SK-N-SH (cell line): ENCODE measurements at regions of chr1 and their contacts with region 1.

Region 1: DNA sequence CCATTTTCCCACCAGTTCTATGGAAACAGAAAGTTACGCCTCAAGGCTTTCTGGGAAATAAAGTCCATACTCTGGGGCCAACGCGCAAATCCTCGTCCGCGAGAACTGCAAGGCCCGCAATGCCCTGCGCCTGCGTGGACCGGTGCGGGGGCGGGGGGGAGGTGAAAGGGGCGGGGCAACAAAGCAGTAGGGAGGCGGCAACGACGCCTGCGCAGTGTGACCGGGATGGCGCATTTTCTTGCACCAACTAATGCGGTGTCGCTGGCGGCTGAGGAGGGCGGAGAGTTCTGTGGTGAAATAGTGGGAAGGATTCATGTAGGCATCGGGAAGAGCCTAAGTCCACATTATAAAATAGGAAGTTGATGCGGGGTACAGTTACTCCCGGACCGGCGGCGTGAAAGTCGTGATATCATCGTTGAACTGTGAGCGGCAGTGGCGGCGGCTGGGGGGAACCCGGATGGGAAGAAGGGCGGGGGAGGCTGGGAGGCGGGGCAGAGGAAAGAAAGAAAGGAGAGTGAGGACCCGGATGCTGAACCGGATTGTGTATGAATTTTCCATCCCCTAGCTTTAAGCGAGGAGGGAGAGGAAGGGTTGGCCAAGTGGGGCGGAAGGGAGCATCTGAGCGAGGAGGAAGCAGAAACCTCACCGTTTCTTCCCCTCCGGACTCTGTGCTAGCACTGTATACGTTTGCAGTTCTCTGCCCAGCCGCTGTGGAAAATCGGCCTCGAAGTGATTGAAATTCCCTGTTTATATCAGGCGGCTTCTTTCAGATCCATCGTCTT is at the start of gene GGPS1:
- DNase-seq: peak; percentile 92
- H3K4me3 ChIP-seq: peak within 1 kb of the TSS; percentile 86
- H3K27ac ChIP-seq: peak within 1 kb of the TSS; percentile 96 to 99
- H3K4me1 ChIP-seq: peaks cover 13 to 28% of the 10 kb centered on the region in 2 experiments; a peak in 3 of 4 replicates
- H3K27me3 ChIP-seq: no peaks in the 10 kb centered on the region
- CTCF ChIP-seq: no peak; the same call in 1 of the 2 replicates
- EP300 ChIP-seq: peak; percentile 8 to 13; a peak in 1 of 4 replicates
- RAD21 ChIP-seq: no peak
- polyA plus RNA-seq, gene GGPS1: 15.7 and 18.5 TPM in 2 replicates

Region 2: GRCh38 chr1:235253219-235253962 is 75.2 kb before region 1 on chr1:
- CTCF ChIA-PET with region 1: interaction called, 34 read pairs
- POLR2A ChIA-PET with region 1: no interaction called
- DNase-seq: peak; percentile 50
- H3K4me3 ChIP-seq: no peak overlapping the region; a peak in 1 of 4 replicates
- H3K27ac ChIP-seq: no peak overlapping the region
- H3K4me1 ChIP-seq: no peaks in the 10 kb centered on the region; a peak in 1 of 4 replicates
- H3K27me3 ChIP-seq: no peaks in the 10 kb centered on the region
- CTCF ChIP-seq: peak; percentile 94
- EP300 ChIP-seq: no peak
- RAD21 ChIP-seq: peak; percentile 89